BJ (cell line): ENCODE measurements at regions of chr3 and their contacts with region 1.

Region 1: DNA sequence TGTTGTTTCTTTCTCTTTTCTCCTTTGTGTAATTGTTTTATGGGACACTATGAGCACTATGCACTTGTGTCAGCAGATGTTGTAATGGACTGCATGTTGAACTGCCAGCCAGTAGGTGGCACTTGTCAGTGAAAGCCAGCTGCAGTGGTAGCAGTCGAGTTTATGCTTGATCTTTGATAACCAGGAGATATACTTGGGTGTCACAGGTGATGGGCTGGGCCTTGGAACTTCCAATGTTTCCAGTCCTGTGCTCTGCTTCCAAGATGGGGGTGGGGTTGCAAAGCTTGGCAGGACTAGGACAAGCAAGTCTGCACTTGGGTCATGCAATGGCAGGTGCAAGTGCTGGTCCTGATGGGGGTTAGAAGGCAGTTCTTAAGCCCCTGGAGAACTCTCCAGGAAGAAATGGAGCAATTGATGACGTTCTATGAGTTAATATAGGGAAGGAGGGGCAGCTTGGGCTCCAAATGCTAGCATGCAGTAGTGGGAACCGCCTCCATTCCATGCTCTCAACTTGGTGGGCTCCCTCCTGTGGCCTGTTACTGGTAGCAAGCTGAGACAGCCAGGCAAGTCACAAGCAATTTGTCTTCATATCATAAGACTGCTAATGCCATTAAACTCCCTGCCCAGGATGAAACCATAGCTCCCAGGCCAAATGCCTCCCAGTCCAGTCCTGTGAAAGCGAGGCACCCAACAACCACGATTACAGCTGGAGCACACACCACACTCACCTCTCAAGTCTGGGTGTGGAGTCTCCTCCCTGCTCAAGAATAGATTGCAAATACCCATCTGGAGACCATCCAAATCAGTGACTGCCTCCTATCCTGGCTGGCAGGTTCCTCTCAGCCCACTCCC is 287.2 kb downstream of the CGGBP1 start:
- DNase-seq: no peak
- H3K4me3 ChIP-seq: no peak overlapping the region
- H3K27me3 ChIP-seq: no peaks in the 10 kb centered on the region
- CTCF ChIP-seq: peak; percentile 78

Region 2: GRCh38 chr3:87719060-87719459 is 52.5 kb before region 1 on chr3:
- CTCF ChIA-PET with region 1: no interaction called
- POLR2A ChIA-PET with region 1: no interaction called
- DNase-seq: no peak
- H3K4me3 ChIP-seq: no peak overlapping the region
- H3K27me3 ChIP-seq: no peaks in the 10 kb centered on the region
- CTCF ChIP-seq: no peak

Region 3: GRCh38 chr3:87742250-87742649 is 29.3 kb before region 1 on chr3:
- CTCF ChIA-PET with region 1: no interaction called
- POLR2A ChIA-PET with region 1: no interaction called
- DNase-seq: no peak
- H3K4me3 ChIP-seq: no peak overlapping the region
- H3K27me3 ChIP-seq: no peaks in the 10 kb centered on the region
- CTCF ChIP-seq: no peak

Region 4: GRCh38 chr3:88005066-88005465 is 233.5 kb after region 1 on chr3:
- CTCF ChIA-PET with region 1: interaction called, 15 read pairs
- POLR2A ChIA-PET with region 1: no interaction called
- DNase-seq: peak; percentile 1
- H3K4me3 ChIP-seq: no peak overlapping the region
- H3K27me3 ChIP-seq: peaks cover 3% of the 10 kb centered on the region; the same call in 1 of the 2 replicates
- CTCF ChIP-seq: peak; percentile 32

Region 5: GRCh38 chr3:88180398-88180999 is 408.9 kb after region 1 on chr3:
- CTCF ChIA-PET with region 1: interaction called, 3 read pairs
- POLR2A ChIA-PET with region 1: interaction called, 14 read pairs
- DNase-seq: peak; percentile 7
- H3K4me3 ChIP-seq: no peak overlapping the region
- H3K27me3 ChIP-seq: no peaks in the 10 kb centered on the region
- CTCF ChIP-seq: peak; percentile 59